Left cardiac atrium (tissue), 4 donors: ENCODE measurements at regions of chr15 and their contacts with region 1.

Region 1: DNA sequence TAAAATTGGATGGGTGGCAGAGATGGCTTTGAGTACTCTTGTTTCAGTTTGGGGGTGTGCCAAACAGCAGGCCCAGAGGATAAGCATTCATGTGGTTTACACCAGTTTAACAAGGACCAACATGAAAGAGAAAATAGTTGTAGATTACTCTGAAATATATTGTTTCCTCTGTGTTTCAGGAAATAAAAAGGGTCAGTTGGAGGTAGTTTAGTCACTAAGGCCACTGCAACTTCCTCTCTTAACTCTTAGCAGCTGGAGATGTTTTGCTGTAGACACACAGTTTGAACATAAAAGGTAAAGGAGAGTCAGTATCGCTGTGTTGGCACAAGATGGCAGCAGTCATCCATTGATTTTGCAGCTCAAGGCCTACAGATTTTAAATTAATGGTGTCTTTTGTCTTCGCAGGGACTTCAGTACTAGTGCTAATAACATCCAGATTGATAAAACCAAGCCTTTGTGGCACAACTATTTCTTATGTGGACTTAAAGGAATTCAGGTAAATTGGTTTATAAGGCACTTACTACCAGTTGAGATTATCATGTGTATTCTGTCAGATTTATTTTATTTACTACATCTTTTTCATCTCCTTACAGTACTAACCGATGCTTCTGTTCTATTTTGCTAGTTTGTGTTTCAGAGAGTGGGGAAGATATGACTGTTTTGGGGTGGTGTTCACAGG is 65.5 kb downstream of the GALK2 start:
- DNase-seq: peak; percentile 33
- ATAC-seq: peak; percentile 86 to 92

Region 2: DNA sequence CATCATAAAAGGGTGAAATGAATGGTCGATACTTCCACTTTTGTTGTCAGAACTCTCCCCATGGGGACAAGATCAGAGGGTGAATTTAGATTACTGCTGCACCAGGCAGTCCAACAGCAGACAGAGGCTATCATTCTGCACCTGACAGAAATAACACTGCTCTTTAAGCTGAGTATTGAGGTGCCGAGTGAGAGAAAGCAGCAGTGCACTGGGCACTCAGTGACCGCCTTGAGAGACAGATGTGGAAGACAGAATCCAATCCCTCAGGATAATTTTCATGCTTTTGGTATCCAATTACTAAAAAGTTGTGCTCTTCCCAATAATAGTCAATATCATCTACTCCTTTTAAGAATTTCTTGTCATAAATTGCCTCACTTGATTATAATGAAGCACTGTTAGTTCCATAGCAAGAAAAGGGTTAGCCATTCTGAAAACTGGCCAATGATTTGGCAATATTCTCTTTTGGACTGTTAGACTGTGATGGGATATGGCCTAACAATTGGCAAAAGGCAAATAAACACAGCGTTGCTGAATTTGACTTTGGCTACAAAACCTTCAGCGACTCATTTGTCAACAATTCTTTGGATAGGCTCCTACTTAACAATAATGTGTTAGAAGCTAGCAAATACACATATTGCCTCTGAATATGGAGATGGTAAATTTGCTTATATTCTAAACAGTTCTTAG is 193.0 kb after region 1 on chr15:
- intact Hi-C with region 1: no loop called
- DNase-seq: peak; percentile 49
- ATAC-seq: peak; percentile 89 to 93

Region 3: DNA sequence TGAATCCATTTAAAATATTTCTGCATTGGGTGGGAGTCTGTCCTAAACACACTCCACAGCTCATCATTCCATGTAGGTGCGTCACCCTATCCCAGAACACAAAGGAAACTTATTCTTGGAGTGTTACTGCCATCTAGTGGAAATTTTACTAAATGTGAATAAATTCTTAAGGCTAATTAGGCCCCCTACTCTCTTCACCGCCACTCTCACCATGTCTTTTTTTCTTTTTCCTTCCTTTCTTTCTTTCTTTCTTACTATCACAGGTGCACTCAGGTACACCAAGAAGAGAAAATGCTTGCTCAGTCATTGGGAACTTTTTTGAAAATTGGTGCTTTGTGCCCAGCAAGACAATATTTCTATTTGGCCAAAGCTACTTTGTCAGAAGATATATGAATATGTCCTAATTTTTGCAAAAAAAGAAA is 909.9 kb after region 1 on chr15:
- intact Hi-C with region 1: loop called in 1 of 2 experiments (anchors 5 kb)
- DNase-seq: no peak
- ATAC-seq: peak; percentile 90 to 93